ENCODE measurements at regions of chr11 and their contacts with region 1.

Region 1: DNA sequence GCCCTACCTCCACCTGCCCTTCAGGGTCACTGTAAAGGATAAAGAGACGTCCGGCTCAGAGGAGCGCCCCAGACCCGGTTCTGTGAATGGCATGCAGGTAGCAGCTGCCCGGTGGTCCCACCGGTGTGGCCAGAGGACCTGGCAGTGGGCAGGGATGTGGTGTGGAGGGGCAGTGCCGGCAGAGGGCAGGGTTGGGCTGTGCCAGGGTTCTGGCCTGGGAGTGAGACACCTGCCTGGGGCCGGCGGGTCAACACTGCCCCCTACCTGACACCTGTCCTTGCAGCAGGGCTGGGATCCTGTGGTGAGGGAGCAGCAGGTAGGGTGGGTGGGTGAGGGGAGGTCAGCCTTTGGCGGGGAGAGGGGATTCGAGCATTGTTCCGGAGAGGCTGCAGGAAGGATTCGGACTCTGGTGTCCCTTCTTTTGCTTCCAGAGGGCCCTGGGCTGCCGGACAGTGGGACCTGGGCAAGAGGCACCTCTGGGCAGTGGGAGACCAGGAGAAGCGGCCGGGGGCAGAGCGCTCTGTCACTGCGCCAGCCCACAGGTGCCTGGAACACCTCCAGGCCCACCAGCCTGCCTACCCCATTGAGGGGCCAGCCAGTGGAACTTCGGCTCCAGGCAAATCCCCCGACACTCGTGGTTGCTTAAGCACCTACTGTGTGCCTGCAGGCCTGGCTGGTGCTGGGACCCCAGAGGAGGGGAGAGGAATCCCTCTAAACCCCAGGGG is 1.6 kb upstream of the PHLDA2 start:
- DNase-seq: peak in 1 of 2 donors; percentile 60
- ATAC-seq: no peak
- H3K4me3 ChIP-seq: peak overlapping the region; percentile 19
- H3K4me3 Mint-ChIP-seq: peak overlapping the region; percentile 78
- H3K27ac ChIP-seq: no peak overlapping the region
- H3K27ac Mint-ChIP-seq: peak overlapping the region; percentile 69 to 92
- H3K4me1 ChIP-seq: peaks cover 50% of the 10 kb centered on the region
- H3K4me1 Mint-ChIP-seq: peaks cover 17 to 39% of the 10 kb centered on the region in 2 donors
- H3K27me3 ChIP-seq: peaks cover 31% of the 10 kb centered on the region
- H3K27me3 Mint-ChIP-seq: peaks cover 10 to 22% of the 10 kb centered on the region in 2 donors
- CTCF ChIP-seq: peak; percentile 30

Region 2: GRCh38 chr11:2898366-2899079 is 32.3 kb before region 1 on chr11:
- intact Hi-C with region 1: loop called (anchors 5 kb)
- DNase-seq: peak; percentile 72 to 82
- ATAC-seq: peak; percentile 74 to 78 (median 76)
- H3K4me3 ChIP-seq: peak overlapping the region; percentile 29
- H3K4me3 Mint-ChIP-seq: peak overlapping the region; percentile 91
- H3K27ac ChIP-seq: peak overlapping the region; percentile 72
- H3K27ac Mint-ChIP-seq: peak overlapping the region; percentile 92 to 99
- H3K4me1 ChIP-seq: peaks cover 53% of the 10 kb centered on the region
- H3K4me1 Mint-ChIP-seq: peaks cover 32 to 53% of the 10 kb centered on the region in 2 donors
- H3K27me3 ChIP-seq: no peaks in the 10 kb centered on the region
- H3K27me3 Mint-ChIP-seq: no peaks in the 10 kb centered on the region
- CTCF ChIP-seq: no peak

Region 3: DNA sequence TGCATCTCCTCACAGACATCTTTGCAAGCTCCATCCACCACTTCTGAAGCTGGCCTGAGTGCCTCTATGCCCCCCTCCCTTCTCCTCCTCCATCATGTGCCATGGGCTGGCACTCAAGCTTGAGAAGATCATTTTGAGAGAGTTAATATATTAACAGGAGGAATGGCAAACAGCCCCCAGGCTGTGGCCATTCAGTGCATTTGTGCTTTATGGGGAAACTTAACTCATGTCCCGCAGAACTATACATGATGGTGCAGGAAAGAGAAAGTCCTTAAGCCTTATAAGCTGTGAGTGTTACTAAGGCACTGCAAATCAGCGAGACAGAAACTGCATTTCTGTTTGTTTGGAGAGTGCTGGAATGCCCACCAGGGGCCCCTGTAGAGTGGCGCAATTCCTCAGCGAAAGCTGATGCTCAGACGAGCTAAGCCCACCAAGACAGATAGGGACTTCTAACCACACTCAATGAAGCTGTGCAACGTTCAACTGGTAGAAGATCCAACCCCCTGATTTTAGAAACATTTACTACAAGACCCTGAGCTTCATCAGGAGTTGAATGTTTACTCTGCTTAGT is 25.1 kb after region 1 on chr11:
- intact Hi-C with region 1: no loop called
- DNase-seq: no peak
- ATAC-seq: no peak
- H3K4me3 ChIP-seq: no peak overlapping the region
- H3K4me3 Mint-ChIP-seq: no peak overlapping the region
- H3K27ac ChIP-seq: no peak overlapping the region
- H3K27ac Mint-ChIP-seq: peak overlapping the region in 1 of 2 donors; percentile 18
- H3K4me1 ChIP-seq: peaks cover 4% of the 10 kb centered on the region
- H3K4me1 Mint-ChIP-seq: peaks cover 13 to 15% of the 10 kb centered on the region in 2 donors
- H3K27me3 ChIP-seq: no peaks in the 10 kb centered on the region
- H3K27me3 Mint-ChIP-seq: no peaks in the 10 kb centered on the region
- CTCF ChIP-seq: no peak